ENCODE measurements at regions of chr6 and their contacts with region 1.

Region 1: GRCh38 chr6:21593412-21593926 is at the start of gene SOX4:
- DNase-seq: peak; percentile 83
- ATAC-seq: peak; percentile 63 to 69
- H3K4me3 ChIP-seq: peak within 1 kb of the TSS; percentile 66 to 91 (median 72)
- H3K27ac ChIP-seq: peak within 1 kb of the TSS; percentile 78 to 86 (median 82)
- H3K4me1 ChIP-seq: peaks cover 8 to 14% of the 10 kb centered on the region in 2 donors
- H3K27me3 ChIP-seq: peaks cover 0 to 4% (median 0%) of the 10 kb centered on the region in 3 donors
- CTCF ChIP-seq: no peak
- POLR2A ChIP-seq: peak; percentile 43 to 87
- total RNA-seq, gene SOX4: 0.80 to 1.6 (median 1.0) TPM

Region 2: GRCh38 chr6:20401205-20402091 is 1192.0 kb before region 1 on chr6 and contains the start of gene E2F3:
- in situ Hi-C with region 1: no loop called
- intact Hi-C with region 1: loop called (anchors 5 kb)
- DNase-seq: peak; percentile 100
- ATAC-seq: peak; percentile 90 to 94
- H3K4me3 ChIP-seq: peak within 1 kb of the TSS; percentile 79 to 92 (median 86)
- H3K27ac ChIP-seq: peak within 1 kb of the TSS; percentile 87 to 98 (median 95)
- H3K4me1 ChIP-seq: peaks cover 0 to 9% of the 10 kb centered on the region in 2 donors
- H3K27me3 ChIP-seq: no peaks in the 10 kb centered on the region
- CTCF ChIP-seq: no peak
- POLR2A ChIP-seq: peak; percentile 25 to 42
- total RNA-seq, gene E2F3: 5.4 to 13.6 (median 10.7) TPM

Region 3: GRCh38 chr6:20564269-20564668 is 1029.2 kb before region 1 on chr6:
- in situ Hi-C with region 1: loop called (anchors 5 to 10 kb)
- intact Hi-C with region 1: loop called (anchors 1 kb)
- DNase-seq: no peak
- ATAC-seq: no peak
- H3K4me3 ChIP-seq: no peak overlapping the region
- H3K27ac ChIP-seq: no peak overlapping the region
- H3K4me1 ChIP-seq: peaks cover 19 to 20% of the 10 kb centered on the region in 2 donors
- H3K27me3 ChIP-seq: no peaks in the 10 kb centered on the region
- CTCF ChIP-seq: peak in 4 of 5 experiments; percentile 49 to 69 (median 68)
- POLR2A ChIP-seq: no peak

Region 4: GRCh38 chr6:20877008-20877937 is 716.2 kb before region 1 on chr6:
- in situ Hi-C with region 1: no loop called
- intact Hi-C with region 1: loop called (anchors 5 kb)
- DNase-seq: peak; percentile 15 to 37
- ATAC-seq: peak; percentile 77 to 79
- H3K4me3 ChIP-seq: no peak overlapping the region
- H3K27ac ChIP-seq: peak overlapping the region in 1 of 4 donors; percentile 33
- H3K4me1 ChIP-seq: no peaks in the 10 kb centered on the region
- H3K27me3 ChIP-seq: no peaks in the 10 kb centered on the region
- CTCF ChIP-seq: no peak
- POLR2A ChIP-seq: no peak

Region 5: GRCh38 chr6:21354805-21355238 is 238.6 kb before region 1 on chr6:
- in situ Hi-C with region 1: no loop called
- intact Hi-C with region 1: loop called (anchors 5 kb)
- DNase-seq: peak; percentile 20 to 25
- ATAC-seq: peak; percentile 95 to 96
- H3K4me3 ChIP-seq: peak overlapping the region in 1 of 4 donors; percentile 25
- H3K27ac ChIP-seq: peak overlapping the region; percentile 66 to 76 (median 73)
- H3K4me1 ChIP-seq: peaks cover 7 to 9% of the 10 kb centered on the region in 2 donors
- H3K27me3 ChIP-seq: no peaks in the 10 kb centered on the region
- CTCF ChIP-seq: no peak
- POLR2A ChIP-seq: no peak

Region 6: DNA sequence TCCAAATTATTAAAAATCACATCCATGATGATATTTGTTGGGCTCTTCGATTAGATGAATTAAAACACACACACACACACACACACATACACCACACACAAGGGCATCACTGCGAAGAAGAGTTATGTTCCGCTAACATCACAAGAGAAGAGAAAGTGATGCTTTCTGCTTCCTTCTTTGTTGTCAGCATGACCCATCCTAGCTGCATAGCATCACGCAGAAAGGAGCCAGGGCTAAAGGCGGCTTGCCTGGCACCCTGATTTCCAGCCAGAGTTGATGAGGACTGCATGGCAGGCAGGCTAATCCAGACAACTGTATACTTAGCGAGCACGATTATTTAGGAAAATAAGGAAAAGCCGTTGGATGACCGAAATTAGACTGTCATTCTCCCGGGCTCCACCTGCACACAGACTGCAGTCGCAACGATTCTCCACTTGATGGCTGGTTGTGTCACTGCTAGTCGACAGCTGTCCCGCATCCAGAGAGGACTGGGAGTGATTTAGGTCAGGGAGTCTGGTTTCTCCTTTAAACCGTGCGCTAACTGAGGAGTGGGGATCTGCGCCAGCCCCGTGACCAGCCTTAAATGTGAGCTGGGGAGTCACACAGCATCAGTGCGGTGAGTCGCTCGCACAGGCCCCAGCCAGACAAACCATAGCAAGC is 70.5 kb before region 1 on chr6:
- in situ Hi-C with region 1: no loop called
- intact Hi-C with region 1: loop called (anchors 5 kb)
- DNase-seq: no peak
- ATAC-seq: no peak
- H3K4me3 ChIP-seq: no peak overlapping the region
- H3K27ac ChIP-seq: no peak overlapping the region
- H3K4me1 ChIP-seq: no peaks in the 10 kb centered on the region
- H3K27me3 ChIP-seq: no peaks in the 10 kb centered on the region
- CTCF ChIP-seq: no peak
- POLR2A ChIP-seq: no peak

Region 7: GRCh38 chr6:21653905-21654304 is 60.4 kb after region 1 on chr6:
- in situ Hi-C with region 1: no loop called
- intact Hi-C with region 1: no loop called
- DNase-seq: no peak
- ATAC-seq: no peak
- H3K4me3 ChIP-seq: no peak overlapping the region
- H3K27ac ChIP-seq: no peak overlapping the region
- H3K4me1 ChIP-seq: no peaks in the 10 kb centered on the region
- H3K27me3 ChIP-seq: no peaks in the 10 kb centered on the region
- CTCF ChIP-seq: no peak
- POLR2A ChIP-seq: no peak

Region 8: DNA sequence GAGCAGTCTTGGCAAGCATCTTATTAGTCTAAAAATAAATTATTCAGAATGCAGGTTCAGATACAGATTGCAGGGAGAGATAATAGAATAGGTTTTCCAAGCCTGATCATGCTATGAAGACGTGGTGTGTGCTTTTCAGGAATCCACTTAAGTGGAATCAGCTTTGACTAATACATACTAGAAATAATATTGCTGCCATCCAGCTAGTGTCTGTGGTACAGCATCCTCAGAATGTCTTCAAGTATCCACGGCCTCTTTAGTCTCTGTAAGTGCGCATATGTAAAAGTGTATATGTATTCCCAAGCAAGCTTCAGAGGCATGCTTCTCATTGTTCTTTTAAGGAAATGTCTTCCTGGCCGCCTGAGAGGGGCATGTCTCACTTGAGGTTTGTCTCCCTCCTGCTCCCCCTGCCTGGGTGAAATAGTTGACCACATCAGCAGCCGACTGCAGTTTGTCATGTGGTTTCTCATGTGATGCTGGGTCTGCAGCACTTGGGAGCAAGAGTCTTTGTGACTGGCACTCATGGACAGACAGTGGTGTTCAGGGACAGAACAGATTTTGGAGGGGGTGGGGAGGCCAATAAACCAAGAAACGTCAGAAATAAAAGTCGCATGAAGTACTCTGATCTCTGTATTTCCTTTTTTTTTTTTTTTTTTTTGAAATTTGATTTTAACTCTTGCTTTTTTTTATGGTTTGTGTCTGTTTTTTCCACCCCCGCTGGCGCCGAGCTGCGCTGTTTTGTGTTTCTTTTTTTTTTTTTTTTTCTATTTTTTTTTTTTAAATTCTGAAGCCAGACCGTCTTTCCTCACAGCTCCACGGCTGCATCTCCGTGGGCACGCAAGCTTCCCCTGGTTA is 552.6 kb after region 1 on chr6:
- in situ Hi-C with region 1: no loop called
- intact Hi-C with region 1: loop called (anchors 5 kb)
- DNase-seq: no peak
- ATAC-seq: no peak
- H3K4me3 ChIP-seq: peak overlapping the region; percentile 52 to 69 (median 54)
- H3K27ac ChIP-seq: no peak overlapping the region
- H3K4me1 ChIP-seq: peaks cover 55 to 59% of the 10 kb centered on the region in 2 donors
- H3K27me3 ChIP-seq: no peaks in the 10 kb centered on the region
- CTCF ChIP-seq: no peak
- POLR2A ChIP-seq: no peak

Region 9: GRCh38 chr6:22801826-22802225 is 1208.4 kb after region 1 on chr6:
- in situ Hi-C with region 1: no loop called
- intact Hi-C with region 1: no loop called
- DNase-seq: no peak
- ATAC-seq: no peak
- H3K4me3 ChIP-seq: no peak overlapping the region
- H3K27ac ChIP-seq: no peak overlapping the region
- H3K4me1 ChIP-seq: no peaks in the 10 kb centered on the region
- H3K27me3 ChIP-seq: no peaks in the 10 kb centered on the region
- CTCF ChIP-seq: no peak
- POLR2A ChIP-seq: no peak